ENCODE measurements at regions of chr10 and their contacts with region 1.

Region 1: GRCh38 chr10:79374312-79375191 is 27.3 kb downstream of the PPIF start:
- DNase-seq: peak; percentile 59 to 94
- H3K4me3 ChIP-seq: no peak overlapping the region
- H3K27ac ChIP-seq: no peak overlapping the region
- H3K4me1 ChIP-seq: no peaks in the 10 kb centered on the region
- H3K27me3 ChIP-seq: no peaks in the 10 kb centered on the region; a peak in 2 of 7 replicates
- CTCF ChIP-seq: peak; percentile 86 to 97 (median 92)
- EP300 ChIP-seq: no peak
- POLR2A ChIP-seq: no peak
- RAD21 ChIP-seq: peak; percentile 99 to 100

Region 2: DNA sequence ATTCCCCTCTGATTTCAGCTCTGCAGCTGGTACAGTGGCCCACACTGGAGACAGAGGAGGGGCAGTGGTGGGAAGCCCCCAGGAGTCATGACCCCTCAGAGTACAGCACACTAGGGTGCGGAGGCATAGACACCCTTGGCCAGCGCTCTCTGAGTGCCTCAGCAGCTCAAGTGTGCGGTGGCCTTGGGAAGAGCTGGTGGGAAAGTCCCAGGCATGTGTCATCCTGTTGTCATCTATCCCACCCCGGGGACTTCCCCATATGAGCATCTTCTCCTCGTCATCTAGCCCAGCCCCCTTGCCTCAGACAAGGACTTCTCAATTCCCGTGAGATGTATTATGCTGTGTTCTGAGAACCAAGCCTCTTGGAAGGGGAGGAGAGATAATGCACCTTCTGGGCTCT is 42.8 kb before region 1 on chr10:
- CTCF ChIA-PET with region 1: no interaction called
- POLR2A ChIA-PET with region 1: no interaction called
- DNase-seq: no peak
- H3K4me3 ChIP-seq: no peak overlapping the region
- H3K27ac ChIP-seq: no peak overlapping the region
- H3K4me1 ChIP-seq: peaks cover 0 to 8% (median 0%) of the 10 kb centered on the region in 4 experiments; a peak in 3 of 7 replicates
- H3K27me3 ChIP-seq: no peaks in the 10 kb centered on the region
- CTCF ChIP-seq: no peak
- EP300 ChIP-seq: no peak
- POLR2A ChIP-seq: no peak
- RAD21 ChIP-seq: no peak

Region 3: DNA sequence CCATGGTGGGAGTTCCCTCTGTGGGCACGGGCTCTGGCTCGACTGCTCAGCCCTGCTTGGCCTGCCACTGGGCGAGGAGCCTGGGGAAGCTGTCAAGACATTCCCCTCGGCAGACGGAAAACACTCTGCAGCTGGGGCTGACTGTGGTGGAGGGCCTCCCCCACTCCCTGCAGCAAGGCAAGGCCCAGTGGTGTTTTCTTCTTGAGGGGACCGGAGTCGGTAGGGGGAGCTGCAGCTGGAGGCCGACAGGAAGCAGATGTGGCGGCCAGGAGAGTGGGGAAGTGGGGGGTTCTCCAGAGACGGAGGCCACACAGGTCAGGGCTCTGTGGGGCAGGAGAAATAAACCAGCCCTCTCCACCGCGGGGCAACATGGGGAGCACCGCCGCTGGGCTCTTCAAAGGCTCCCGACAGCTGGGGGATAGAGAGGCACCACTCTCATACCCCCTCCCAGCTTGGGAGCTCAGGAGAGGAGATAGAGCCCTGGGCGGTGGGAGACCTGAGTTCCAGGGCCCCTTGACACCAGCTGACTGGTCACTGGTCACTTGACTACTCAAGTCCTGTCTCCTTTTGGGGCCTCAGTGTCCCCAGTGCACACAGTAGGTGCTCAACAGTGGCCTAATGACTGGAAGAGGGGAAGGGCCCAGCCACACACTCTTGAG is 16.1 kb after region 1 on chr10:
- CTCF ChIA-PET with region 1: interaction called, 24 read pairs
- POLR2A ChIA-PET with region 1: interaction called, 3 read pairs
- DNase-seq: peak in 1 of 2 experiments; percentile 40
- H3K4me3 ChIP-seq: no peak overlapping the region
- H3K27ac ChIP-seq: no peak overlapping the region
- H3K4me1 ChIP-seq: peaks cover 0 to 1% (median 0%) of the 10 kb centered on the region in 4 experiments; a peak in 2 of 7 replicates
- H3K27me3 ChIP-seq: no peaks in the 10 kb centered on the region; a peak in 1 of 7 replicates
- CTCF ChIP-seq: 0 out of 4 replicates have a peak, but pooled peaks of 1 of the 3 experiments have one; percentile 6
- EP300 ChIP-seq: no peak
- POLR2A ChIP-seq: no peak
- RAD21 ChIP-seq: no peak

Region 4: DNA sequence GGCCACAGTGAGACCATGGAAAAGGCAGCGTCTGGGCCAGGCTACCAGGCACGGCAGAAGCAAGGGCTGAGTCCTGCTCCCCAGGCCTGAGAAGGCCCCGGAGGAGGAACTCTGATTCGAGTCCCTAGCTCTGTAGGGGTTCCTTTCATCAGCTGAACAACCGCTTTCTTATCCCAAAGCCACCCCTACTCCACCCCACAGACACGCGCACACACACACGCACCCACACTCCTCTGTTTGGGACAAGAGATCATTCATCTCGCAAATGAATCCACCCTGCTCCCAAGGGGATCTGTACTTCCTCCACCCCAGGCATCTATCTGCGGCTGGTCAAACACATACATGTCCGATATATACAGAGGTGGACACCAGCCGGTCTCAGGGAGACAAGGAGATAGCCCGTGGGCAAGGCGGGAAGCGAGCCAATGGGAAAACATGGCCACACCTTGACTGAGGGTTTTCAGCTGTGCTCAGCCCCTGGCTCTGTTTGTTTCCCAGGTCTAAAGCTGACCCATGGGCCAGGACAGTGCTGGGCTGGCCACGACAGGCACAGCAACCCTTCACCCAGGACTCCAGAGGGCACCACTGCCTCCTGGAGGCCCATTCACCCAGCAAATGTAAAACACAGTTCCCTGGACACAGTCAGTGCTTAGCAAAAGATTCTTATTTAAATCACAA is 63.6 kb after region 1 on chr10:
- CTCF ChIA-PET with region 1: interaction called, 15 read pairs
- POLR2A ChIA-PET with region 1: no interaction called
- DNase-seq: no peak
- H3K4me3 ChIP-seq: no peak overlapping the region
- H3K27ac ChIP-seq: no peak overlapping the region
- H3K4me1 ChIP-seq: peaks cover 0 to 11% (median 2%) of the 10 kb centered on the region in 4 experiments; a peak in 4 of 7 replicates
- H3K27me3 ChIP-seq: peaks cover 0 to 4% (median 1%) of the 10 kb centered on the region in 4 experiments; a peak in 3 of 7 replicates
- CTCF ChIP-seq: peak; percentile 22 to 54 (median 52); a peak in 3 of 4 replicates
- EP300 ChIP-seq: no peak
- POLR2A ChIP-seq: no peak
- RAD21 ChIP-seq: peak; percentile 39 to 60

Region 5: DNA sequence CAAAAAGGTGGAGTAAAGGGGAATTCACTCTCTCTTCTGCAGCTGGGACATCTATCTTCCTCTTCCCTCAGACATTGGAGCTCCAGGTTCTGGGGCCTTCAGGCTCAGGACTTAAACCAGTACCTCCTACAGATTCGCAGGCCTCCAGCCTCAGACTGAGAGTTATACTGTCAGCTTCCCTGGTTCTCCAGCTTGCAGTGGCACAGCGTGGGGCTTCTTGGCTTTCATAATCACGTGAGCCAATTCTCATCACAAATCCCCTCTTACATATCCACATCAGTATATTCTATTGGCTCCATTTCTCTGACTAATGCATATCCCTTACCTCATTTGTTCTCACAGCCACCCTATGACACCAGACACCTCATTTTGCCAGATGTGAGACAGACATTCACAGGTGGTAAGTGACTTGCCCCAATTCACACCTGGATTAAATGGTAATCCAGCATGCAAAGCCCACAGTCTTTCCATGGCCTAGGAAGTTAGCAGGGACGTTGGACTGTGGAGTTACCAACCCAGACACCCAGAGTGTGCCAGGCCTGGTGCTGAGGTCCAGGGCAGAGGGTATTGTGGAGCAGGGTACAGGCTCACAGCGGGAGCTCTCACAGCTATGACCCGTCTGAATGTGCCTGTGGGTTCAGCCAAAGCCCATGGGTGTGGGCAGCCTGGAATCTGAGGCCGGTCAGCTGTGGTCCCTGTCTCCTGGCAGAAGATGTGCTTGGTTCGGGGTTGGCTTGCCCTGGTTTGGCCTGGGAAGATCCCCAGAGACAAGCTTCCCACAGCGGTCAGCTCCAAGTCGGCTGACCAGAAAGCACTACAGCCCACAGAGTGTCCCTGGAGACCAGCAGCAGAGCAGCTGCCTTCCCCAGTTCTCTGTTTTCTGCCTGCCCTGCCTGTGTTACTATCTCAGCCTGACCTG is 89.3 kb after region 1 on chr10:
- CTCF ChIA-PET with region 1: interaction called, 62 read pairs
- POLR2A ChIA-PET with region 1: no interaction called
- DNase-seq: no peak
- H3K4me3 ChIP-seq: no peak overlapping the region
- H3K27ac ChIP-seq: no peak overlapping the region
- H3K4me1 ChIP-seq: no peaks in the 10 kb centered on the region
- H3K27me3 ChIP-seq: no peaks in the 10 kb centered on the region; a peak in 1 of 7 replicates
- CTCF ChIP-seq: no peak
- EP300 ChIP-seq: no peak
- POLR2A ChIP-seq: no peak
- RAD21 ChIP-seq: no peak

Region 6: DNA sequence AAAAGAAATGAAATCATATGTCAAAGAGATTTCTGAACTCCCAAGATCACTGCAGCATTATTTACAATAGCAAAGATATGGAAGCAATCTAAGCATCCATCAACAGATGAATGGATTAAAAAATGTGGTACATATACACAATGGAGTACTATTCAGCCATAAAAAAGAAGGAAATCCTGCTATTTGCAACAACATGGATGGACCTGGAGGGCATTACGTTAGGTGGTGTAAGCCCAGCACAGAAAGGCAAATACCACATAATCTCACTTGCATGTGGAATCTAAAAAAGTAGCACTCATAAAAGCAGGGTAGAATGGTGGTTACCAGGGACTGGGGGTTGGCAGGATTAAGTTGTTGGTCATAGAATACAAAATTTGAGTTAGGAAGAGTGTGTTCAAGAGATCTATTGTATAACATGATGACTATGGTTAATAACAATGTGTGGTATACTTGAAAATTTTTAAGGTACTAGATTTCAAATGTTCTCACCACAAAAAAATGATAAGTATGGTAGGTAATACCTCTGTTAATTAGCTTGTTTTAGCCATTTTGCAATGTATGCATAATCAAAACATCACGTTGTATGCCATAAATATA is 104.9 kb after region 1 on chr10:
- CTCF ChIA-PET with region 1: interaction called, 79 read pairs
- POLR2A ChIA-PET with region 1: no interaction called
- DNase-seq: no peak
- H3K4me3 ChIP-seq: no peak overlapping the region
- H3K27ac ChIP-seq: no peak overlapping the region
- H3K4me1 ChIP-seq: no peaks in the 10 kb centered on the region
- H3K27me3 ChIP-seq: 0 out of 7 replicates have a peak, but pooled peaks cover 0 to 2% (median 0%) of the 10 kb centered on the region in 4 experiments
- CTCF ChIP-seq: no peak
- EP300 ChIP-seq: no peak
- POLR2A ChIP-seq: no peak
- RAD21 ChIP-seq: no peak

Region 7: DNA sequence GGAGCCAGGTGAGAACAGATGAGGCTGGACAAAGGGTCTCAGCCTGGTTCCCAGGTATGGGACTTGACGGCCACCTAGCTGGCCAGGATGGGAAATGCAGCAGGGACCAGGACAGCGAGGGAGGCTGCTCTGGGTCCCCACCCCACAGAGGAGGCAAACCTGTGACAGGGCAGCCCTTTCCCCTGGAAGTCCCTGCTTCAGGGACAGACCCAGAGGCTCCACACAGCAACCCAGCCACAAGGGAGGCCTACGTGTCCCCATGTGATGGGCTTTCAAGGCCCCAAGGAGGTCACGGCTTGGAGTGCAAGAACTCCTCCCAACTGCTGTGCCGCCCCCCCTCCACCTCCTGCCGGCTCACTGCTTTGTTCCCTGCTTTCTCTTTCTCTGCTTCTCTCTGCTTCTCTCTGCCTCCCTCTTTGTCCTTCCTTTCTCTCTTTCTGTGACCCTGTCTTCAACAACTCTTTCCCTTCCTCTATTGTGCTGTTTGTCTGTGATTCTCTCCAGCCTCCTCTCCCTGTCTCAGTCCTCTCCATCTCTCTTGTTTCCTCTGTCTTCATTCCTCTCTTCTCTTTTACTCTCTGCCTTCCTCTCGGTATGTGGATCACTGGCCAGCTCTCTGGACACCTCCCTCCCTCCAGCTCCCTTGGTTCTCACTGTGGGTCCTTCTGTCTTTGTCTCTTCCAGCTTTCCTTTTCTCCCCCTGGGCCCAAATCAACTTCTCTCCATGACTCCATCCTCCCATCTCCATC is 128.2 kb after region 1 on chr10:
- CTCF ChIA-PET with region 1: interaction called, 79 read pairs
- POLR2A ChIA-PET with region 1: interaction called, 5 read pairs
- DNase-seq: peak; percentile 29 to 78
- H3K4me3 ChIP-seq: no peak overlapping the region
- H3K27ac ChIP-seq: no peak overlapping the region
- H3K4me1 ChIP-seq: no peaks in the 10 kb centered on the region
- H3K27me3 ChIP-seq: no peaks in the 10 kb centered on the region; a peak in 3 of 7 replicates
- CTCF ChIP-seq: peak; percentile 66 to 75 (median 71)
- EP300 ChIP-seq: no peak
- POLR2A ChIP-seq: no peak
- RAD21 ChIP-seq: peak; percentile 72 to 74

Measured in H1 (cell line).